ENCODE measurements at regions of chr5 and their contacts with region 1.

Region 1: DNA sequence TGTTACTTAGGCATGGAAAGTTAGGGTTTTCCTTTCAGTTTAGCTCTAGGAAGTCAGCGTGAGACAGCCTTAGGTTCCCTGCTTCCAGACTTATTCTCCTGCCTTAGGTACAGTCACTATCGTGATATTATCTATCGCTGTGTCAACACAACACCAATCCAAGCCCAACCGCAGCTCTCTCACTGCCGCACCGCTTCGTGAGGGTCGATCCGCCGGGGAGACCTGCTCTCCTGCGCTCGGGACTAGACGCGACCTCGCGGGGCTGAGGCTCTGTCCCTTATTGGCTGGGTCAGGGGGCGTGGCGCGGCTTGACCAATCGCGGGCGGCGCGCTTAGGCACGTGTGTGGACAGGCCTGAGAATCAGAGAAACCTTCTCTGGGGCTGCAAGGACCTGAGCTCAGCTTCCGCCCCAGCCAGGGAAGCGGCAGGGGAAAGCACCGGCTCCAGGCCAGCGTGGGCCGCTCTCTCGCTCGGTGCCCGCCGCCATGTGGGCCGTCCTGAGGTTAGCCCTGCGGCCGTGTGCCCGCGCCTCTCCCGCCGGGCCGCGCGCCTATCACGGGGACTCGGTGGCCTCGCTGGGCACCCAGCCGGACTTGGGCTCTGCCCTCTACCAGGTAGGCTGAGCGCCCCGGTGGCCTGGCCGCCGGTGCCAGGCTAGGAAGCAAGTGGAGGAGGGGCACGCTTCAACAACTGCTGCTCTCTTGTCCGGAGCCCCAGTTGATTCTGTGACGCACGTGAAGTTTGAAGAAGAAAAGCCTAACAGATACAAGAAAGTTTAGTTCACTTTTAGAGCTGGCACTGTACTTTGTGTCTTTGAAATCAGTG is at the start of gene MCCC2:
- DNase-seq: peak; percentile 95 to 97 (median 95)
- H3K4me3 ChIP-seq: peak within 1 kb of the TSS; percentile 83 to 92
- H3K4me3 Mint-ChIP-seq: peak within 1 kb of the TSS; percentile 90 to 100 (median 98)
- H3K27ac ChIP-seq: peak within 1 kb of the TSS; percentile 87
- H3K27ac Mint-ChIP-seq: peak within 1 kb of the TSS; percentile 90 to 100 (median 99)
- H3K4me1 ChIP-seq: peaks cover 43% of the 10 kb centered on the region
- H3K4me1 Mint-ChIP-seq: peaks cover 29 to 48% (median 40%) of the 10 kb centered on the region in 4 donors
- H3K27me3 ChIP-seq: no peaks in the 10 kb centered on the region
- H3K27me3 Mint-ChIP-seq: no peaks in the 10 kb centered on the region
- total RNA-seq, gene MCCC2: 31.1 to 31.9 TPM

Region 2: GRCh38 chr5:71455427-71456361 is 131.5 kb before region 1 on chr5 and contains the start of gene BDP1:
- CTCF ChIA-PET with region 1: no interaction called
- POLR2A ChIA-PET with region 1: interaction called, 7 read pairs
- intact Hi-C with region 1: loop called (anchors 5 kb)
- DNase-seq: peak; percentile 96 to 98 (median 97)
- H3K4me3 ChIP-seq: peak within 1 kb of the TSS; percentile 93 to 96
- H3K4me3 Mint-ChIP-seq: peak within 1 kb of the TSS; percentile 96 to 100 (median 98)
- H3K27ac ChIP-seq: peak within 1 kb of the TSS; percentile 84
- H3K27ac Mint-ChIP-seq: peak within 1 kb of the TSS; percentile 93 to 100 (median 99)
- H3K4me1 ChIP-seq: peaks cover 23% of the 10 kb centered on the region
- H3K4me1 Mint-ChIP-seq: peaks cover 21 to 36% (median 30%) of the 10 kb centered on the region in 4 donors
- H3K27me3 ChIP-seq: peaks cover 5% of the 10 kb centered on the region
- H3K27me3 Mint-ChIP-seq: peaks cover 5 to 7% of the 10 kb centered on the region in 2 donors
- total RNA-seq, gene BDP1: 45.1 to 47.9 TPM

Region 3: GRCh38 chr5:71623221-71623794 is 36.2 kb after region 1 on chr5:
- CTCF ChIA-PET with region 1: no interaction called
- POLR2A ChIA-PET with region 1: no interaction called
- intact Hi-C with region 1: no loop called
- DNase-seq: no peak
- H3K4me3 ChIP-seq: no peak overlapping the region
- H3K4me3 Mint-ChIP-seq: no peak overlapping the region
- H3K27ac ChIP-seq: no peak overlapping the region
- H3K27ac Mint-ChIP-seq: peak overlapping the region in 2 of 7 donors; percentile 20 to 39
- H3K4me1 ChIP-seq: no peaks in the 10 kb centered on the region
- H3K4me1 Mint-ChIP-seq: peaks cover 0 to 10% (median 5%) of the 10 kb centered on the region in 4 donors
- H3K27me3 ChIP-seq: no peaks in the 10 kb centered on the region
- H3K27me3 Mint-ChIP-seq: no peaks in the 10 kb centered on the region

Region 4: DNA sequence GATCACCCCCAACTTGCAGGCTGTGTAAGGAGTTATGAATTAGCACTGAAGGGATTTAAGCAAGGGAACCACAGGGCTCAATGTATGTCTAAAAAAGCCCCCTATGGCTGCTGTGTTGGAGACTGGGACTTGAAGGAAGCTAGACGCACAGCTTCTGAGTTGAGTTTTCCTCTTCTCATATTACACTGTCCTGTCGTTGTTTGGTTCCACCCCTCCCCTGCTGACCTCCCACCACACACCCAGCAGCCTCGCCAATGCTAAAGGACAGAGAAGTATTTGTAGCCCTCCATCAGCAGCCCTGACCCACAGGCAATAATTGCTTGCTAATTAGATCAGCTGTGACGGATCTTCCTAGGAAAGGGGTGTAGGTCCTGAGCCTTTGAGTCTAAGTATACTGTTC is 116.8 kb after region 1 on chr5:
- CTCF ChIA-PET with region 1: no interaction called
- POLR2A ChIA-PET with region 1: no interaction called
- intact Hi-C with region 1: no loop called
- DNase-seq: no peak
- H3K4me3 ChIP-seq: no peak overlapping the region
- H3K4me3 Mint-ChIP-seq: no peak overlapping the region
- H3K27ac ChIP-seq: no peak overlapping the region
- H3K27ac Mint-ChIP-seq: peak overlapping the region in 1 of 7 donors; percentile 71
- H3K4me1 ChIP-seq: no peaks in the 10 kb centered on the region
- H3K4me1 Mint-ChIP-seq: peaks cover 0 to 1% (median 0%) of the 10 kb centered on the region in 4 donors
- H3K27me3 ChIP-seq: no peaks in the 10 kb centered on the region
- H3K27me3 Mint-ChIP-seq: peaks cover 5 to 8% of the 10 kb centered on the region in 2 donors

Region 5: GRCh38 chr5:72319976-72320752 is 733.0 kb after region 1 on chr5 and contains the starts of genes MRPS27 and PTCD2:
- CTCF ChIA-PET with region 1: no interaction called
- POLR2A ChIA-PET with region 1: no interaction called
- intact Hi-C with region 1: loop called (anchors 5 kb)
- DNase-seq: peak; percentile 92 to 97 (median 96)
- H3K4me3 ChIP-seq: peak within 1 kb of the TSS; percentile 100
- H3K4me3 Mint-ChIP-seq: peak within 1 kb of the TSS; percentile 96 to 99 (median 98)
- H3K27ac ChIP-seq: peak within 1 kb of the TSS; percentile 65
- H3K27ac Mint-ChIP-seq: peak within 1 kb of the TSS; percentile 87 to 97 (median 96)
- H3K4me1 ChIP-seq: peaks cover 9% of the 10 kb centered on the region
- H3K4me1 Mint-ChIP-seq: peaks cover 19 to 49% (median 25%) of the 10 kb centered on the region in 4 donors
- H3K27me3 ChIP-seq: no peaks in the 10 kb centered on the region
- H3K27me3 Mint-ChIP-seq: no peaks in the 10 kb centered on the region
- total RNA-seq, gene MRPS27: 36.6 to 44.6 TPM
- total RNA-seq, gene PTCD2: 11.6 to 12.0 TPM